Caco-2 (cell line): ENCODE measurements at regions of chr1 and their contacts with region 1.

Region 1: GRCh38 chr1:156276966-156277381 is 5.7 kb downstream of the SMG5 start:
- DNase-seq: peak; percentile 59 to 60
- H3K4me3 ChIP-seq: no peak overlapping the region
- H3K4me3 Mint-ChIP-seq: no peak overlapping the region
- H3K27ac Mint-ChIP-seq: no peak overlapping the region
- H3K4me1 ChIP-seq: peaks cover 10% of the 10 kb centered on the region
- H3K4me1 Mint-ChIP-seq: peaks cover 12% of the 10 kb centered on the region
- H3K27me3 ChIP-seq: no peaks in the 10 kb centered on the region
- H3K27me3 Mint-ChIP-seq: no peaks in the 10 kb centered on the region
- CTCF ChIP-seq: no peak

Region 2: GRCh38 chr1:156160743-156161171 is 116.2 kb before region 1 on chr1:
- CTCF ChIA-PET with region 1: no interaction called
- POLR2A ChIA-PET with region 1: no interaction called
- intact Hi-C with region 1: no loop called
- DNase-seq: no peak
- H3K4me3 ChIP-seq: no peak overlapping the region
- H3K4me3 Mint-ChIP-seq: no peak overlapping the region
- H3K27ac Mint-ChIP-seq: no peak overlapping the region
- H3K4me1 ChIP-seq: no peaks in the 10 kb centered on the region
- H3K4me1 Mint-ChIP-seq: no peaks in the 10 kb centered on the region
- H3K27me3 ChIP-seq: no peaks in the 10 kb centered on the region
- H3K27me3 Mint-ChIP-seq: no peaks in the 10 kb centered on the region
- CTCF ChIP-seq: no peak

Region 3: GRCh38 chr1:156200044-156200443 is 76.9 kb before region 1 on chr1:
- CTCF ChIA-PET with region 1: no interaction called
- POLR2A ChIA-PET with region 1: interaction called, 20 read pairs
- intact Hi-C with region 1: no loop called
- DNase-seq: no peak
- H3K4me3 ChIP-seq: no peak overlapping the region
- H3K4me3 Mint-ChIP-seq: no peak overlapping the region
- H3K27ac Mint-ChIP-seq: no peak overlapping the region
- H3K4me1 ChIP-seq: peaks cover 13% of the 10 kb centered on the region; the same call in 1 of the 2 replicates
- H3K4me1 Mint-ChIP-seq: peaks cover 7% of the 10 kb centered on the region
- H3K27me3 ChIP-seq: no peaks in the 10 kb centered on the region
- H3K27me3 Mint-ChIP-seq: no peaks in the 10 kb centered on the region
- CTCF ChIP-seq: no peak

Region 4: DNA sequence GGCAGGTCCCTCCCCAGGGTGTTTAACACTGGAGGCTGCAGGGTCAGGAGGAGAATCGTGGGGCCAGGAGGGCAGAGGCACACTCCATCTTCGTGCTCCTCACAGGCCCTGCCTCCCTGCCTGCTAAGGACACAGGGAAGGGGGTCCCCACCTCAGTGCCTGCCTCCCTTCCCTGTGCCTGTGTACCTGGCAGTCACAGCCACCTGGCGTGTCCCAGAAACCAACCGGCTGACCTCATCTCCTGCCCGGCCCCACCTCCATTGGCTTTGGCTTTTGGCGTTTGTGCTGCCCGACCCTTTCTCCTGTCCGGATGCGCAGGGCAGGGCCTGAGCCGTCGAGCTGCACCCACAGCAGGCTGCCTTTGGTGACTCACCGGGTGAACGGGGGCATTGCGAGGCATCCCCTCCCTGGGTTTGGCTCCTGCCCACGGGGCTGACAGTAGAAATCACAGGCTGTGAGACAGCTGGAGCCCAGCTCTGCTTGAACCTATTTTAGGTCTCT is 35.6 kb before region 1 on chr1:
- CTCF ChIA-PET with region 1: no interaction called
- POLR2A ChIA-PET with region 1: no interaction called
- intact Hi-C with region 1: no loop called
- DNase-seq: no peak
- H3K4me3 ChIP-seq: no peak overlapping the region
- H3K4me3 Mint-ChIP-seq: no peak overlapping the region
- H3K27ac Mint-ChIP-seq: no peak overlapping the region
- H3K4me1 ChIP-seq: no peaks in the 10 kb centered on the region
- H3K4me1 Mint-ChIP-seq: no peaks in the 10 kb centered on the region
- H3K27me3 ChIP-seq: no peaks in the 10 kb centered on the region
- H3K27me3 Mint-ChIP-seq: no peaks in the 10 kb centered on the region
- CTCF ChIP-seq: no peak

Region 5: DNA sequence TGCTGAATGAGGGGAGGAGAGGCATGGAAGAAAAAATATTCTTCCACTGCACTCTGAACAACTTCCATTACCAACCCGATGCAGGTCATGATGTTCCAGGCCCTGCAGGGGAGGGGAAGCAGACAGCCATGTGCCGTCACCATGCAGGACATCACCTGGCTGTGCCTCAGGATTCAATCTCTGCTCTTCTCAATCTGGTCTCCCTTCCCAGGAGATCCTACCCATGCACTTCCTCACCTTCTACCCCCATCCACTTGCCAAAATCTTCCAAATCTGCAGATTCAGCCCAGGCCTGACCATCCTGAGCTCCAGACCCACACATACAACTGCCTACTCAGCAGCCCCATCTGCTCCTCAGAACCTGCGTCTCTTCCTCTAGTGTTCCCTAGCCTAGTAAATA is 23.3 kb before region 1 on chr1:
- CTCF ChIA-PET with region 1: interaction called, 11 read pairs
- POLR2A ChIA-PET with region 1: no interaction called
- intact Hi-C with region 1: no loop called
- DNase-seq: no peak
- H3K4me3 ChIP-seq: no peak overlapping the region
- H3K4me3 Mint-ChIP-seq: no peak overlapping the region
- H3K27ac Mint-ChIP-seq: no peak overlapping the region
- H3K4me1 ChIP-seq: no peaks in the 10 kb centered on the region
- H3K4me1 Mint-ChIP-seq: no peaks in the 10 kb centered on the region
- H3K27me3 ChIP-seq: no peaks in the 10 kb centered on the region
- H3K27me3 Mint-ChIP-seq: no peaks in the 10 kb centered on the region
- CTCF ChIP-seq: no peak

Region 6: GRCh38 chr1:156266051-156266450 is 10.9 kb before region 1 on chr1:
- CTCF ChIA-PET with region 1: no interaction called
- POLR2A ChIA-PET with region 1: no interaction called
- intact Hi-C with region 1: no loop called
- DNase-seq: no peak
- H3K4me3 ChIP-seq: no peak overlapping the region
- H3K4me3 Mint-ChIP-seq: no peak overlapping the region
- H3K27ac Mint-ChIP-seq: no peak overlapping the region
- H3K4me1 ChIP-seq: no peaks in the 10 kb centered on the region
- H3K4me1 Mint-ChIP-seq: no peaks in the 10 kb centered on the region
- H3K27me3 ChIP-seq: no peaks in the 10 kb centered on the region
- H3K27me3 Mint-ChIP-seq: no peaks in the 10 kb centered on the region
- CTCF ChIP-seq: no peak